Common myeloid progenitor, CD34-positive (primary cell): ENCODE measurements at regions of chr2 and their contacts with region 1.

Region 1: GRCh38 chr2:197359859-197360258 is 49.3 kb upstream of the ANKRD44 start:
- DNase-seq: no peak
- H3K4me3 ChIP-seq: no peak overlapping the region
- H3K27ac ChIP-seq: no peak overlapping the region
- H3K4me1 ChIP-seq: no peaks in the 10 kb centered on the region
- H3K27me3 ChIP-seq: no peaks in the 10 kb centered on the region

Region 2: DNA sequence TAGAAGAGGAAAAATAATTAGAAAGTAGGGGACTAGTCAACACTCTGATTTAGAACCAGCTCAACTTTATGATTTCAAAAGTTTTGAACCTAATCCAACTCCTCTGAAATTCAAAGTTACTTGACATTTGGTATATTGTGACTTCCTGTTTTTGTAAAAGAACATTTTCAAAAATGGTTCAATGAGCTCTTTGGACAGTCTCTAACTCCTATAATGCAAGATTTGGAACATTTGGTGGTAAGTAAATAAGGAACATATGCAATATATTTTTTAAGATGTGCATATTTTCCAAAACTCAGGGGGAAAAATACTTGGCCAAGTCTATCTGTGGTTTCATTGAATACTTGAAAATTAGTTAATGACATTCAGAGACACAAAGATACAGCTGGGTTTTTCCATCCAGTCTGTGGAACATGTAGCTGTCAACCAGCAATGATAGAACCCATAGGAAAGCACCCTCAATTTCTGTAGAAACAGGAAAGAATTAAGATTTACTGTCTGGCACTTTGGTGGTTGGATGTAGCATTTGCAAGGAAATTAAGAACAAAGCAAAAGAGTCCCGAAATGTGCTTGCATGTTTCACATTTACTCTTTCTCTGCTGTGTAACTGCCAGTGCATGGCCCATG is 32.3 kb before region 1 on chr2:
- CTCF ChIA-PET with region 1: interaction called, 12 read pairs
- POLR2A ChIA-PET with region 1: no interaction called
- DNase-seq: peak in 2 of 3 donors; percentile 46 to 58
- H3K4me3 ChIP-seq: peak overlapping the region in 1 of 7 experiments; percentile 0
- H3K27ac ChIP-seq: no peak overlapping the region
- H3K4me1 ChIP-seq: peaks cover 17 to 37% (median 30%) of the 10 kb centered on the region in 4 experiments
- H3K27me3 ChIP-seq: no peaks in the 10 kb centered on the region

Region 3: DNA sequence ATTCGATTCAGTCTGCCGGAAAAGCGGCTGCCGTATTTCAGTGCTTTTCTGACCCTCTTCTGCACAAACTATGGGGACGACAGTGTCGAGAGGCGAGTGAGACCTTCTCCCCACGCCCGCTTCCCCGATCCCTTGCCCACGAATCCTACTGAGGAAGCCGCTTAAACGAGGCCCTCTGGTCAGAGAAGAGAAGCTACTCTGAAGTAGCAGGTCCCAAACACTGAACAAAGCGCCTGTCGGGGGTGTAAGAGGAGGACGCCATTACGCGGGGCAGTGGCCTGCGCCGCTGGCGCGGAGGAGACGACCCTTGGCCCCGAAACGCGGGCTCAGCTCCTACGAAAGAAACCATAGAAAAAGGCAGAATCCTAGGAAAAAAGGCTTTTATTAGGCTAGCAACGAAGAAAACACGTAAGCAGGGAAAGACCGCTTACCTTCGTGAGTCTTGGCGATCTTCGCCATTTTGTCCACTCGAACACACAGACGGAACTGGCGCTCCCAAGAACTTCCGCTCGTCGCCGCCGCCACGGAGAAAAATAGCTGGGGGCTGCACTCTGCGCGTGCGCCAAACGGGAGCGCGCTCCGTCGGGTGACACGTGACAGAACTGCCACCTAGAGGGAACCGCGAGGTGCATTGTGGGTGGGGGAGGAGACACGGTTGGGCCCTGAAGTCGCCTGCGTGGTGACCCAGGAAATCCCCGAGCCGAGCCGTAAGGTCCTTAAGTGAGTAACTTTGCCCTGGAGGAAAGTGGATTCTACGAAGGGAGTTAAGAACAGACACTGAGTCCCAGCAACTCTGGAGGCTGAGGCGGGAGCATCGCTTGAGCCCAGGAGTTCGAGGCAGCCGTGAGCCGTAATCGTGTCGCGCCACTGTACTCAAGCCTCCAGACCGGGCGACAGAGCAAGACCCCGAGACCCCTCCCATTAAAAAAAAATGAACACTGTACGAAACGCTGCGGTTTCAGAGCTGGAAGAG is 75.0 kb after region 1 on chr2 and contains the start of gene SF3B1:
- CTCF ChIA-PET with region 1: no interaction called
- POLR2A ChIA-PET with region 1: no interaction called
- DNase-seq: peak; percentile 99 to 100 (median 100)
- H3K4me3 ChIP-seq: peak within 1 kb of the TSS; percentile 89 to 100 (median 100)
- H3K27ac ChIP-seq: peak within 1 kb of the TSS; percentile 100
- H3K4me1 ChIP-seq: peaks cover 25 to 47% (median 38%) of the 10 kb centered on the region in 4 experiments
- H3K27me3 ChIP-seq: no peaks in the 10 kb centered on the region